Right cardiac atrium (tissue), 5 donors: ENCODE measurements at regions of chr22 and their contacts with region 1.

Region 1: DNA sequence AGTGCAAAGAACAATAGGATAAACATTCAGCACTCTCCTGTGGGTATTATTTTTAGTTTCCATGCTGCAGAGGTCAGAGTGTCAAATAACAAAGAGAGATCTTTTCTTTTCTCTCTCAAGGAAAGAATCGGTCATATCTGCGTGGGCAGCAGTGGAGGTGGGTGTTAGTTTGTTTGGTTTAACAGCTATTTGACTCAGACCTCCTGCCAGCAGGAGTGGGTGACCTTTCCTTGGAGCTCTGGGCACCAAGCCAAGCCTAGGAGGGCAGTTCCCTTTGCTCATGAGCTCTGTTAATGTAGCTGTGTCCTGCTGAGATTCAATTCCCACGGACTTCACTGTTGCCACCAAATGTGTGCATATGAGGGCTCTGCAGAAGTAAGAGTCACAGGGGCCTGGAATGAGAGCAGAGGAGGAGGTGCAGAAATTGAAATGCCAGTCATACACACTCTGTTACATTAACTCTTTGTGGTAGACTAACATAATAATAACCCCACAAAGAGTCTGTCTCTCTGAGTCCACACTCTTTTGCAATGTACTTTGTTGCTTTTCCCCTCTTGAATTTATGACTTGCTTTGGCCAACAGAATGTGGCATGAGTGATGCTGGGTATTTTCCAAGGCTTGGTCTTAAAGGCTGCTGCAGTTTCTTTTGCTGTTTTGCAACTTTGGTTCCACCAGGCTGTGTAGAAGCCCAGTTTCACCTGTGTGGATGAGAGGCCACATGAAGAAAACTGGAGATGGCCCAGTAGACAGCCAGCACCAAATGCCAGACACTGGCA is 76.0 kb upstream of the GRK3 start:
- DNase-seq: peak; percentile 69 to 85 (median 81)
- ATAC-seq: peak; percentile 64 to 83
- H3K4me3 ChIP-seq: no peak overlapping the region
- H3K27ac ChIP-seq: no peak overlapping the region
- H3K4me1 ChIP-seq: peaks cover 5% of the 10 kb centered on the region
- H3K27me3 ChIP-seq: no peaks in the 10 kb centered on the region

Region 2: DNA sequence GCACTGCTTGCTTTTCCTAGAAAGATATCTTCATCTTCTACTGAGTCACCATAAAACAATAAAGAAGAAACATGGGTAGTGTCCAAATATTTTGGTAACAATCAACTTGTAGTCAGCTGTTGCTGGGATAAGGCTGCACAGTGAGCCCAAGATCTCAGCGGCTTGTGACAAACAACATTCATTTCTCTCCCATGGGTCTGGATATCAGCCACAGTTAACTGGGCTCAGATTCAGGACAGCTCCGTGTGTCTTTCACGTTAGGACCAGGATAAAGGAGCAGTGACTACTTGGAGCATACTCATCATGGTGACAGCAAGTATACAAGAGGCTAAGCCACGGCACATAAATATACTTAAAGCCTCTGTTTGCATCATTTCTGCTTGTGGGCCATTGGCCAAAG is 48.2 kb after region 1 on chr22:
- intact Hi-C with region 1: loop called in 2 of 4 experiments (anchors 5 to 10 kb)
- DNase-seq: peak in 1 of 3 donors; percentile 33
- ATAC-seq: peak; percentile 66 to 72
- H3K4me3 ChIP-seq: no peak overlapping the region
- H3K27ac ChIP-seq: no peak overlapping the region
- H3K4me1 ChIP-seq: no peaks in the 10 kb centered on the region
- H3K27me3 ChIP-seq: no peaks in the 10 kb centered on the region